ENCODE measurements at regions of chr7 and their contacts with region 1.

Region 1: GRCh38 chr7:36389371-36390198 is at the start of gene ANLN:
- DNase-seq: peak; percentile 86
- H3K4me3 ChIP-seq: peak within 1 kb of the TSS; percentile 57 to 91 (median 87)
- H3K27ac ChIP-seq: peak within 1 kb of the TSS; percentile 63
- H3K4me1 ChIP-seq: peaks cover 31% of the 10 kb centered on the region
- H3K27me3 ChIP-seq: peaks cover 0 to 2% of the 10 kb centered on the region in 2 experiments
- CTCF ChIP-seq: no peak
- POLR2A ChIP-seq: peak; percentile 49
- total RNA-seq, gene ANLN: 112 and 119 TPM in 2 replicates

Region 2: GRCh38 chr7:36408589-36408988 is 19.0 kb after region 1 on chr7:
- CTCF ChIA-PET with region 1: interaction called, 4 read pairs
- POLR2A ChIA-PET with region 1: no interaction called
- dilution Hi-C with region 1: no loop called
- intact Hi-C with region 1: loop called (anchors 2 kb)
- DNase-seq: peak; percentile 52
- H3K4me3 ChIP-seq: no peak overlapping the region
- H3K27ac ChIP-seq: no peak overlapping the region
- H3K4me1 ChIP-seq: peaks cover 8% of the 10 kb centered on the region
- H3K27me3 ChIP-seq: no peaks in the 10 kb centered on the region
- CTCF ChIP-seq: no peak
- POLR2A ChIP-seq: no peak